ENCODE measurements at regions of chr14 and their contacts with region 1.

Region 1: DNA sequence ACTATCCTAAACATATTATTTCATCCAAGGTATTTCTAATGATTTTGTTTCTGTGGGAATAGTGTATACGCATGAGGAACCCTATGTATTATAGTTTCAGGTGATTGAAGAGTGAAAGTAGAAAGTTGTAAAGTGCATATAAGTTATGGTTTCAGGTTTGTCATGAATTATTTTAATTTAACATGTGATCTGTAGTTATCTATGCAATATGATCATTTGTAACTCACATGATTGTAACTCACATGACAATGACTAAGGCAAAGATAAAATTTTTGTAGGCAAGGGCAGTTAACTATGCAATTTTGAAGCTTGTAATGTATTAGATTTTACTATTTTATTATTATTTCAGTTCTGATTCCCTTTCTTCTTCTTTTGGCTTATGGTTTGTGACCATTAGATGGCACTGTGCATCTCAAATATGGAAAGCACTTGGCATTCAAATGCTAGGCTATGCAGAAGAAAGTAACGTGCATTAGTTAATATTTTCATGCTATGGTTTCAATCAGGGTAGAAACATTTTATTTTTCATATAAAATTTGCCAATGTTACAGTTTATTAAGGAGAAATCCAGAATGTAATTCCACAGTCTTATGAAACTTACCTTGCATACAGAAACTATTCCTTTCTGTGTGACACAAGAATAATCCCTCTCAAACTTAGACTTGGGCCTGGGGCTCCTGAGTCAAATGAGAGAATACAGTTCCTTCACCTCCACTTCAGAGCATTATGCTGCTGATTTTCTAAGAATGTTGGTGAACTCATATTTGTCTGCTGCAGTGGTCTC is 15.8 kb upstream of the TMEM30B start:
- DNase-seq: peak; percentile 60 to 80 (median 77)
- H3K4me3 ChIP-seq: no peak overlapping the region
- H3K27ac ChIP-seq: no peak overlapping the region
- H3K4me1 ChIP-seq: peaks cover 0 to 26% (median 5%) of the 10 kb centered on the region in 4 experiments
- H3K27me3 ChIP-seq: no peaks in the 10 kb centered on the region

Region 2: DNA sequence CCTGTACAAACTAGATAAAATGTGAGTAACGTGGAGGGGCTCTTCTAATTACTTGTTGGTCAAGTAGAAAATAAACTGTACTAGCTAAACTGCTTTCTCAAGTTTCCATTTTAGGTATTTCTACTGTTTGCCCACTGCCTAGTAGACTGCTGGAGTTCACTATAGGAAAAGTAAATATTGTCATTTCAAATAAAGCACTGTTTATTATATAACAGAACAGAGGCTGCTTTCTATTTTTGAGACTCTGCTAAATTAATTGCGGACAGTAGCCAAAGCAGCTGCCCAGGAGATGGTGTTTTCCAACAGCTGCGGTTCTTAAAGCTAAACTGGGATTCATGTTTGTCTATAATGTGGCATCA is 631.8 kb before region 1 on chr14:
- CTCF ChIA-PET with region 1: no interaction called
- POLR2A ChIA-PET with region 1: no interaction called
- DNase-seq: no peak
- H3K4me3 ChIP-seq: no peak overlapping the region
- H3K27ac ChIP-seq: no peak overlapping the region
- H3K4me1 ChIP-seq: no peaks in the 10 kb centered on the region
- H3K27me3 ChIP-seq: peaks cover 4 to 60% (median 30%) of the 10 kb centered on the region in 5 experiments

Region 3: DNA sequence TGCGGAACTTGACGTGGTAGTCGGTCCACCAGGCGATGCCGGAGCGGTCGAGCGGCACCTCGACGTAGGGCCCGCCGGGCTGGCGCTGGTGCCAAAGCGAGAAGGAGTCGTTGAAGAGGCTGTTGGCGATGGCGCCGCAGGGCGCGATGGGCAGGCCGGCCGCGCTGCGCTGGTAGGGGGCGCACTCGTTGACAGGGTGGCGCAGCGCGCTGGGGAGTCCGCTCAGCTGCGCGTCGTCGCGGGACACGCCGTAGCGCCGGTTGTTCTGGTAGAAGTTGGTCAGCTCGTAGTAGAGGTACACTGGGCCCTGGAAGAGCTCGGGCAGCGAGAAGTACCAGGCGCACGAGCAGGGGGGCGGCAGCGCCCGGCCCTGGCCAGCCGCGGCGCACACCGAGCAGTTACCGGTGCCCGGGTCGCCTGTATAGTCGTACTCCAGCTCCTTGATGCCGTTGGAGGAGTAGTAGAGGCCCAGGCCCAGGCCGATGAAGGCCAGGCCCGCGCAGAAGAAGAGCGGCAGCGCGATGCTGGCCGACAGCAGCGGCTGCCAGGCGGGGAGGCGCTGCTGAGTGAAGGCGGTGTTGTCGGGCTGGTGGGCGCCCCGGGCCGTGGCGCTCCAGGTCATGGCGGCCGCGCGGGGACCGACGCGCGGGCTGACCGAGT is 16.3 kb before region 1 on chr14:
- CTCF ChIA-PET with region 1: interaction called, 29 read pairs
- POLR2A ChIA-PET with region 1: no interaction called
- DNase-seq: peak; percentile 77 to 87 (median 81)
- H3K4me3 ChIP-seq: peak overlapping the region; percentile 32 to 78 (median 61)
- H3K27ac ChIP-seq: no peak overlapping the region
- H3K4me1 ChIP-seq: peaks cover 0 to 23% (median 17%) of the 10 kb centered on the region in 4 experiments
- H3K27me3 ChIP-seq: peaks cover 14 to 38% (median 28%) of the 10 kb centered on the region in 5 experiments

Region 4: GRCh38 chr14:61308198-61308597 is 11.3 kb after region 1 on chr14:
- CTCF ChIA-PET with region 1: interaction called, 12 read pairs
- POLR2A ChIA-PET with region 1: no interaction called
- DNase-seq: peak; percentile 81 to 93 (median 87)
- H3K4me3 ChIP-seq: peak overlapping the region in 1 of 7 experiments; percentile 17
- H3K27ac ChIP-seq: peak overlapping the region; percentile 68 to 85
- H3K4me1 ChIP-seq: peaks cover 12 to 29% (median 22%) of the 10 kb centered on the region in 4 experiments
- H3K27me3 ChIP-seq: no peaks in the 10 kb centered on the region

Measured in common myeloid progenitor, CD34-positive (primary cell).